ENCODE measurements at regions of chr5 and their contacts with region 1.

Region 1: DNA sequence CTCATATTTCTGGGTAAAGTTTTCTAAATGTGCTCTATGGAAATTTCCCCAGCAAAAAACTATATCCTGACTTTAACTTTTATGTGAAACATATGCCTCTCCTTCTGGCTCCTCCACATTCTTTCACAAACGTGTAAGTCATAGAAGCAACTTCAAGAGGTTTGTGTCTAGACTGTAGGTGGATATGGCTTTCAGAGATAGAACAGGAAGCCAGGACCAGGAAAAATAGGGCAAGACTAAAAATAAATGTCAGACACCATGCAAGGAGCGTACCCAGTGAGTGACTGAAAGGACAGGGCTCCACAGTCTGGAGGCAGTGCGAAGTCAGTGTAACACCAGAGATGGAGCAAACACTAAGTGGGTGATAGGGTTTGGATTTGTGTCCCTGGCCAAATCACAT is 240.7 kb downstream of the COX7C start:
- DNase-seq: no peak
- H3K4me3 ChIP-seq: no peak overlapping the region
- H3K27ac ChIP-seq: peak overlapping the region in 4 of 59 donors; percentile 10 to 38 (median 14)
- H3K27me3 ChIP-seq: no peaks in the 10 kb centered on the region
- CTCF ChIP-seq: no peak

Region 2: GRCh38 chr5:86439593-86440110 is 418.8 kb before region 1 on chr5:
- intact Hi-C with region 1: no loop called
- DNase-seq: no peak
- H3K4me3 ChIP-seq: no peak overlapping the region
- H3K27ac ChIP-seq: no peak overlapping the region
- H3K27me3 ChIP-seq: no peaks in the 10 kb centered on the region
- CTCF ChIP-seq: no peak

Region 3: DNA sequence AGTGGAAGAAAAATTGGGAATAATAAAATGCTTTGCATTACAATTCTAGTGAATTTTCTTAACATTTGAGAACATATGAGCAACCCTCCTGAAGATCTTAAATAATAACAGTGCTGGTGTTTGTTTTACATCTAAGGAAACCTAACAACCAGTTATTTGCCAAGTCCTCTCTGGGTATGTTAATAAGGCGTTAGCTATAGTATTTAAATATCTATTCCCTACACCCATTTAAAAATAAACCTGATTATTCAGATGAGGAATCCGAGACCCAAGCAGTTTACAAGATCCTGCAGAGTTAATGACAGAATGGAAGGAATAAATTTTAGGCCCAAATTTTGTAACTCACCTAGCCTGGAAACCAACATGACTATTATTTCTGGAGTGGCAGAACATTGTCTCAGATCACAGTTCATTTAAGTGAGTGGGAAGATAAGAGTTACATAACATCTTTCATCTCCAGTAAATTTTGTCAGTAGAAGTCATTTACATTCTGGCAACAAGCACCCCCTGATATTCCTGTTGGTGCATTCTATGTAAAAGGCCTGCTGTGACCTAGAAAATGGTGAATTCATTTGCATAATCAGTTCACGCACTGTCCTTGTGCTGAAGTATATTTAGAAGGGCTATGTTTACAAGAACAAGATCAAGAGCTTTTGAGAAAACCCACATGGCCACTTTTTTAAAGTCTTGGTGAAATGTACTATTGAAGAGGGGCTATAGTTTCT is 92.5 kb before region 1 on chr5:
- intact Hi-C with region 1: loop called in 1 of 2 experiments (anchors 5 kb)
- DNase-seq: no peak
- H3K4me3 ChIP-seq: no peak overlapping the region
- H3K27ac ChIP-seq: peak overlapping the region in 13 of 59 donors; percentile 3 to 58 (median 26)
- H3K27me3 ChIP-seq: no peaks in the 10 kb centered on the region
- CTCF ChIP-seq: no peak

Region 4: DNA sequence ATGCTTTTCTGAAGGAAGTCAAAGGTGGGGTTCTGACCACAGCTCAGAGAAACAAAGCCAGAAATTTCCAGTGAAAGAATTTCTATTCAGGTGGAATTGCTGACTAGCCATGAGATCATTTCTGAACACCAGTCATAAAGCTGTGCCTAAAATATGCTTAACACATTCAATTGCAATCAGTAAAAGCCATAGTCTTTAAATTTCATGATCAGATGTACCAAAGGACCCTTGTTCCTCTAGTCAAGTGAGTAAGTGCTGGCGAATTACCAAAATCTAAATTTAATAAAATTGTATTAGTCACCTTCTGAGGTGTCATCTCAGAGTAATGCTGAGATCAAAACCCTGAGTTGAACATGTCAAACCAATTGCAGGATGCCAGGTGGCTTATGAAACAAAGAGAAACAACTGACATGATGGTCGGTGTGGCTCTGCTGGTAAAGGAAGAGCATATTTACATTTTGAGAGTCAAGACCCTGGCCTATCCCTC is 888.5 kb after region 1 on chr5:
- intact Hi-C with region 1: no loop called
- DNase-seq: no peak
- H3K4me3 ChIP-seq: no peak overlapping the region
- H3K27ac ChIP-seq: no peak overlapping the region
- H3K27me3 ChIP-seq: peaks cover 0 to 2% (median 0%) of the 10 kb centered on the region in 45 donors
- CTCF ChIP-seq: no peak